ENCODE measurements at regions of chr12 and their contacts with region 1.

Region 1: GRCh38 chr12:109775172-109775881 is 57.9 kb downstream of the TRPV4 start:
- DNase-seq: peak; percentile 43 to 71 (median 58)
- ATAC-seq: peak; percentile 84
- H3K4me3 ChIP-seq: no peak overlapping the region
- H3K4me3 Mint-ChIP-seq: no peak overlapping the region
- H3K27ac ChIP-seq: no peak overlapping the region
- H3K27ac Mint-ChIP-seq: no peak overlapping the region
- H3K4me1 ChIP-seq: peaks cover 0 to 4% of the 10 kb centered on the region in 2 donors
- H3K4me1 Mint-ChIP-seq: peaks cover 5 to 22% (median 10%) of the 10 kb centered on the region in 7 donors
- H3K27me3 ChIP-seq: no peaks in the 10 kb centered on the region
- H3K27me3 Mint-ChIP-seq: peaks cover 0 to 4% (median 0%) of the 10 kb centered on the region in 5 donors

Region 2: DNA sequence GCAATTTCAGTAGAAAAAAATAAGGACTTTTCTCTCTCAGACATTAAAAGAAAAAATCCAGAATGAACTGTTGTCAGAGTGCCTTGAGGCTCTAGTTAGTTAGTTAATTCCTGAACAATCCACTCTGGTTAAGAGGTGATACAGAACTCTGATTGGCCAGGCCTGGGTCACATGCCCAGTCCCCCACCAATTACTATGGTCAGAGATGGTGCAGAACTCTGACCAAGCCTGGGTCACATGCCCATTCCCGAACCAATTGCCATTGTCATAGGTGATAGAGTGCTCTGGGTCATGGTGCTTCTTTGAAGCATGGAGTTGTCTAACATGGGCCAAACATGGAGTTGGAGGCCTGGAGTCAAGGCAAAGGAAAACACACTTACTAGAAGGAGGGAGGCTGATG is 438.7 kb before region 1 on chr12:
- CTCF ChIA-PET with region 1: no interaction called
- POLR2A ChIA-PET with region 1: no interaction called
- intact Hi-C with region 1: no loop called
- DNase-seq: no peak
- ATAC-seq: no peak
- H3K4me3 ChIP-seq: no peak overlapping the region
- H3K4me3 Mint-ChIP-seq: no peak overlapping the region
- H3K27ac ChIP-seq: no peak overlapping the region
- H3K27ac Mint-ChIP-seq: no peak overlapping the region
- H3K4me1 ChIP-seq: no peaks in the 10 kb centered on the region
- H3K4me1 Mint-ChIP-seq: no peaks in the 10 kb centered on the region
- H3K27me3 ChIP-seq: no peaks in the 10 kb centered on the region
- H3K27me3 Mint-ChIP-seq: peaks cover 12 to 31% (median 24%) of the 10 kb centered on the region in 5 donors

Region 3: GRCh38 chr12:109428037-109428629 is 347.2 kb before region 1 on chr12:
- CTCF ChIA-PET with region 1: interaction called, 4 read pairs
- POLR2A ChIA-PET with region 1: no interaction called
- intact Hi-C with region 1: loop called (anchors 1 kb)
- DNase-seq: peak; percentile 31 to 73 (median 66)
- ATAC-seq: peak; percentile 94
- H3K4me3 ChIP-seq: no peak overlapping the region
- H3K4me3 Mint-ChIP-seq: no peak overlapping the region
- H3K27ac ChIP-seq: no peak overlapping the region
- H3K27ac Mint-ChIP-seq: no peak overlapping the region
- H3K4me1 ChIP-seq: peaks cover under 1 to 2% of the 10 kb centered on the region in 2 donors
- H3K4me1 Mint-ChIP-seq: peaks cover 3 to 9% (median 7%) of the 10 kb centered on the region in 7 donors
- H3K27me3 ChIP-seq: no peaks in the 10 kb centered on the region
- H3K27me3 Mint-ChIP-seq: peaks cover 2 to 26% (median 10%) of the 10 kb centered on the region in 5 donors

Region 4: DNA sequence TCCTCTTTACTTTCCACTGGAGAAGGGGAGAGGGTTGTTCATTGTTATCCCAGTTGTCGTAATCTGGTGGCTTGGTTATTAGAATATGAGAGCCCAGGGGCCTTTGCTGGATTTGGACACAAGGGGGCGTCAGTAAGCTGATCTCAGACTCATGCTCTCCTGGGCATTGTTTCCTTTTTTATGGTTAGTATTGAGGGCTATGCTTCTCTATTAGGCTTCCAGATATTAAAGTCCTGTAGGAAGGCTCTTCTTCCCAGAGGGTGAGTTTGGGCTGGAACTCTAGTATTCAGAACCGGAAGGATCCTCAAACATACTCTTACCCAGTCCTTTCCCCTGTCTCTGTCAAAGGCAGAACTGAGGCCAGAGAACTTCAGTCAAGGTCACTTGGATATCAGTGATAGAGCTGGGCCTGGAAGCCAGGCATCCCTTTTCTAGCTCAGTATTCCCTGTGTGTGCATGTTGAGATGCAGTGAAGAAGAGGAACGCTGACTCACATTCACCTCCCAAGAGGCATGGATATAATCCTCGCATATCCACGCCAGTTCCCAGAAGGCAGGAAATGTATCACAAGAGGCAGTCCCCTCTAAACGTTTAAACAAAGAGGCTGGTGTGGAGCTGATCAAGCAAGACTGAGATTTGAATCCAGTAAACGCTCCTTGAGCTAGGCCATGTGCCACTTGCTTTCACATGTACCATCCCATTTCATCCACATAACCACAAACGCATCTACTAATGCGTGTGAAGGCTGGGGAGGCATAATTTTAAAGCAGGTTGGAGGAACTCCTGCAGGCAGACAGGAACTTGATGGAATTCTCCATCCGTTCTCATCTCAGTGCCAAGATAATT is 256.3 kb before region 1 on chr12:
- CTCF ChIA-PET with region 1: interaction called, 4 read pairs
- POLR2A ChIA-PET with region 1: no interaction called
- intact Hi-C with region 1: loop called in 1 of 2 experiments (anchors 1 kb)
- DNase-seq: peak; percentile 18 to 58 (median 41)
- ATAC-seq: peak; percentile 77
- H3K4me3 ChIP-seq: no peak overlapping the region
- H3K4me3 Mint-ChIP-seq: no peak overlapping the region
- H3K27ac ChIP-seq: no peak overlapping the region
- H3K27ac Mint-ChIP-seq: peak overlapping the region in 4 of 9 donors; percentile 29 to 76 (median 45)
- H3K4me1 ChIP-seq: no peaks in the 10 kb centered on the region
- H3K4me1 Mint-ChIP-seq: peaks cover 0 to 12% (median 0%) of the 10 kb centered on the region in 7 donors
- H3K27me3 ChIP-seq: no peaks in the 10 kb centered on the region
- H3K27me3 Mint-ChIP-seq: no peaks in the 10 kb centered on the region

Region 5: GRCh38 chr12:109553483-109553882 is 221.8 kb before region 1 on chr12:
- CTCF ChIA-PET with region 1: no interaction called
- POLR2A ChIA-PET with region 1: no interaction called
- intact Hi-C with region 1: no loop called
- DNase-seq: no peak
- ATAC-seq: no peak
- H3K4me3 ChIP-seq: no peak overlapping the region
- H3K4me3 Mint-ChIP-seq: no peak overlapping the region
- H3K27ac ChIP-seq: no peak overlapping the region
- H3K27ac Mint-ChIP-seq: no peak overlapping the region
- H3K4me1 ChIP-seq: no peaks in the 10 kb centered on the region
- H3K4me1 Mint-ChIP-seq: peaks cover 0 to 6% (median 0%) of the 10 kb centered on the region in 7 donors
- H3K27me3 ChIP-seq: no peaks in the 10 kb centered on the region
- H3K27me3 Mint-ChIP-seq: peaks cover 0 to 7% (median 0%) of the 10 kb centered on the region in 5 donors

Region 6: GRCh38 chr12:109597795-109598427 is 177.4 kb before region 1 on chr12:
- CTCF ChIA-PET with region 1: interaction called, 27 read pairs
- POLR2A ChIA-PET with region 1: no interaction called
- intact Hi-C with region 1: loop called in 1 of 2 experiments (anchors 1 kb)
- DNase-seq: peak; percentile 24 to 65 (median 48)
- ATAC-seq: peak; percentile 72
- H3K4me3 ChIP-seq: no peak overlapping the region
- H3K4me3 Mint-ChIP-seq: peak overlapping the region in 3 of 10 donors; percentile 2 to 32 (median 22)
- H3K27ac ChIP-seq: no peak overlapping the region
- H3K27ac Mint-ChIP-seq: peak overlapping the region in 1 of 9 donors; percentile 70
- H3K4me1 ChIP-seq: peaks cover 5 to 9% of the 10 kb centered on the region in 2 donors
- H3K4me1 Mint-ChIP-seq: peaks cover 8 to 32% (median 26%) of the 10 kb centered on the region in 7 donors
- H3K27me3 ChIP-seq: no peaks in the 10 kb centered on the region
- H3K27me3 Mint-ChIP-seq: peaks cover 0 to 2% (median 0%) of the 10 kb centered on the region in 5 donors

Region 7: GRCh38 chr12:109713187-109713984 is 61.9 kb before region 1 on chr12 and contains the start of gene FAM222A:
- CTCF ChIA-PET with region 1: no interaction called
- POLR2A ChIA-PET with region 1: no interaction called
- intact Hi-C with region 1: loop called in 1 of 2 experiments (anchors 2 kb)
- DNase-seq: peak; percentile 94 to 99 (median 98)
- ATAC-seq: peak; percentile 94
- H3K4me3 ChIP-seq: peak within 1 kb of the TSS; percentile 41
- H3K4me3 Mint-ChIP-seq: peak within 1 kb of the TSS; percentile 57 to 81 (median 72)
- H3K27ac ChIP-seq: peak within 1 kb of the TSS; percentile 55
- H3K27ac Mint-ChIP-seq: peak within 1 kb of the TSS in 1 of 9 donors; percentile 48
- H3K4me1 ChIP-seq: peaks cover 3 to 11% of the 10 kb centered on the region in 2 donors
- H3K4me1 Mint-ChIP-seq: peaks cover 0 to 4% (median 0%) of the 10 kb centered on the region in 7 donors
- H3K27me3 ChIP-seq: peaks cover 0 to 6% of the 10 kb centered on the region in 2 donors
- H3K27me3 Mint-ChIP-seq: peaks cover 29 to 65% (median 30%) of the 10 kb centered on the region in 5 donors
- total RNA-seq, gene FAM222A: 0.24 to 1.6 (median 0.80) TPM